Colonic mucosa (tissue), 4 donors: ENCODE measurements at regions of chr20 and their contacts with region 1.

Region 1: DNA sequence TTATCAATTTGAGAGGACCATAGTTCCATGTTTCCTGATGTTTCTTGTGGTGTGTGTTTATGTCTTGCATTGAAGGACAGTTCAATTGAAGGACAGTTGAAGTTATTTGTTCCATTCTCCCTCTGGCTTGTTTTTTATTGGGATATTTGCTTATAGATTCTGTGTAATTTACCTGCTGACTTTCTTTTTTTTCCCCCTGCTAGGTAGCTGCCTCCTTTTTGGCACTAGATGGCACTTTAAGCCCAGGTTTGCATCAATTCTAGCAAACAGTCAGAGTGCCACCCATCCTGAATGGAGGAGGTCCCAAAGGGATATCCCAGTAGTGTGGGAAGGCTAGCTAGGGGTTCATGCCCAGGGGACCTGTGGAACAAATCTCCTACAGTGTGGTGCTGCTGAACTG is 78.1 kb downstream of the CFAP61 start:
- DNase-seq: no peak
- H3K4me3 ChIP-seq: no peak overlapping the region
- H3K27ac ChIP-seq: no peak overlapping the region
- H3K4me1 ChIP-seq: no peaks in the 10 kb centered on the region
- H3K27me3 ChIP-seq: no peaks in the 10 kb centered on the region
- CTCF ChIP-seq: peak; percentile 33

Region 2: GRCh38 chr20:20237093-20237959 is 106.9 kb after region 1 on chr20:
- intact Hi-C with region 1: loop called (anchors 5 kb)
- DNase-seq: peak; percentile 42
- H3K4me3 ChIP-seq: no peak overlapping the region
- H3K27ac ChIP-seq: no peak overlapping the region
- H3K4me1 ChIP-seq: no peaks in the 10 kb centered on the region
- H3K27me3 ChIP-seq: no peaks in the 10 kb centered on the region
- CTCF ChIP-seq: peak; percentile 70